A549 (cell line): ENCODE measurements at regions of chr6 and their contacts with region 1.

Region 1: GRCh38 chr6:411421-412145 is 20.0 kb downstream of the IRF4 start:
- DNase-seq: no peak
- ATAC-seq: no peak
- H3K4me3 ChIP-seq: no peak overlapping the region
- H3K27ac ChIP-seq: no peak overlapping the region
- H3K4me1 ChIP-seq: no peaks in the 10 kb centered on the region
- CTCF ChIP-seq: no peak
- EP300 ChIP-seq: no peak
- POLR2A ChIP-seq: no peak
- RAD21 ChIP-seq: no peak

Region 2: DNA sequence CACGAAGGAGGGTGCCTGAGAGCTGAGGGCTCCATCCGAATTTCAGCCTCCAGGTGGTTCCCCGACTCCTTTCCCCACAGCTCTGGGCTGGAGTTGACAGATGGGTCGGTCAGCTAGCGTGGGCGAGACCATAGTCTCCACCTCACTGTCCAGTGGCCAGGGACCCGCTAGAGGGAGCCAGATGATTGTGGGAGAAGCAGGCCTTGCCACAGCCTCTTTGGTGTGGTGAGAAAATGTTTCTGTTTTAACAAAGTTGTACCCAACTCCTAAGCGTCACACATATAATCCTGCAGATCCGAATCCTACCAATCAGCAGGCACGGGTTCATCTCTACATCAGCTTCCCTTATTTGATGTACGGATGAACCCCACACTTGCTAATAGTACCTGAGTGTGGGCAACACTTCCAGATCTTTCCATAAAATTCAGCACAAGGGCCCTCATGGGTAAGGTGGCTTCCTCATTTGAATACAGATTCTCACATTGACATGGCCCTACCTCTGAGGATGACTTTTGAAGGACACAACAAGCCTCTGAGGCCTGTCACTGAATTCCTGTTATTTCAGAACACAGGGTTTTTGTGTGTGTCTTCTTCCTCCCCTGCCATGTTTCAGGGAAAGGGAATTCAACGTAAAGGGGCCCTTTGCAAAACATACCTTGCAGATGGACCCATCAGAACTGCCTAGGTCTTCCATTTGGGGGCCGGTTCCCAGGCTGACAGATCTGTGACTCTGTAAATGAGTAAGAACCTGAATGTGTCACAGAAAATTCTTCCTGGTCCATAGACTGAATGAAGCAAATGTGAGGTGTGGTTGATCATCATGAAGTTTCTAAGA is 222.5 kb before region 1 on chr6:
- CTCF ChIA-PET with region 1: interaction called, 10 read pairs
- POLR2A ChIA-PET with region 1: no interaction called
- DNase-seq: peak; percentile 73 to 74
- ATAC-seq: peak; percentile 95 to 99
- H3K4me3 ChIP-seq: no peak overlapping the region
- H3K27ac ChIP-seq: no peak overlapping the region
- H3K4me1 ChIP-seq: no peaks in the 10 kb centered on the region
- CTCF ChIP-seq: peak; percentile 80
- EP300 ChIP-seq: no peak
- POLR2A ChIP-seq: no peak
- RAD21 ChIP-seq: peak; percentile 86 to 90

Region 3: DNA sequence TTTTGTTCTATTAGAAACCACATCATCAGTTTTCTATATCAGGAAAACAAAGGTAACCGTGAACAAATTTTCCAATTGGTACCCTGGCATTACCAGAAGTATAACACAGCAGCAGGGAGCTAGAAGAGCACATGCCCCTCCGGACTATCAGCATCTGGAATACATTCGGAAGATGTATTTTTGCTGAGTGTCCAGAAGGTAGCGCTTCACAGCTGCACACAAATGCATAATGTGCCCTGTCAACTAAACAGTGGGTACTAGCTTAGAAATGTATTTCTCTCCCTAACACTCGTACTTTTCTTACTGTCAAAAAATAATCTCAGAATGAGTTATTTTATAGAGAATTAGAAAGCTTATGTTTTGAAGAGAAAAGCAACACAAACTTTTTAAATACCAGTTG is 167.8 kb after region 1 on chr6:
- CTCF ChIA-PET with region 1: no interaction called
- POLR2A ChIA-PET with region 1: no interaction called
- DNase-seq: peak; percentile 10 to 26
- ATAC-seq: peak in 1 of 2 experiments; percentile 58; a peak in 2 of 6 replicates
- H3K4me3 ChIP-seq: no peak overlapping the region
- H3K27ac ChIP-seq: no peak overlapping the region
- H3K4me1 ChIP-seq: no peaks in the 10 kb centered on the region; the same call in 2 of the 3 replicates
- CTCF ChIP-seq: peak; percentile 37
- EP300 ChIP-seq: no peak
- POLR2A ChIP-seq: no peak
- RAD21 ChIP-seq: peak in 1 of 2 experiments; percentile 19; a peak in 1 of 5 replicates